GM10248 (cell line): ENCODE measurements at regions of chrX and their contacts with region 1.

Region 1: GRCh38 chrX:101415180-101416145 is 7.4 kb downstream of the HNRNPH2 start:
- DNase-seq: peak; percentile 57
- CTCF ChIP-seq: peak; percentile 33

Region 2: GRCh38 chrX:101430457-101431078 is 15.1 kb after region 1 on chrX:
- CTCF ChIA-PET with region 1: interaction called, 24 read pairs
- POLR2A ChIA-PET with region 1: no interaction called
- DNase-seq: no peak
- CTCF ChIP-seq: no peak

Region 3: DNA sequence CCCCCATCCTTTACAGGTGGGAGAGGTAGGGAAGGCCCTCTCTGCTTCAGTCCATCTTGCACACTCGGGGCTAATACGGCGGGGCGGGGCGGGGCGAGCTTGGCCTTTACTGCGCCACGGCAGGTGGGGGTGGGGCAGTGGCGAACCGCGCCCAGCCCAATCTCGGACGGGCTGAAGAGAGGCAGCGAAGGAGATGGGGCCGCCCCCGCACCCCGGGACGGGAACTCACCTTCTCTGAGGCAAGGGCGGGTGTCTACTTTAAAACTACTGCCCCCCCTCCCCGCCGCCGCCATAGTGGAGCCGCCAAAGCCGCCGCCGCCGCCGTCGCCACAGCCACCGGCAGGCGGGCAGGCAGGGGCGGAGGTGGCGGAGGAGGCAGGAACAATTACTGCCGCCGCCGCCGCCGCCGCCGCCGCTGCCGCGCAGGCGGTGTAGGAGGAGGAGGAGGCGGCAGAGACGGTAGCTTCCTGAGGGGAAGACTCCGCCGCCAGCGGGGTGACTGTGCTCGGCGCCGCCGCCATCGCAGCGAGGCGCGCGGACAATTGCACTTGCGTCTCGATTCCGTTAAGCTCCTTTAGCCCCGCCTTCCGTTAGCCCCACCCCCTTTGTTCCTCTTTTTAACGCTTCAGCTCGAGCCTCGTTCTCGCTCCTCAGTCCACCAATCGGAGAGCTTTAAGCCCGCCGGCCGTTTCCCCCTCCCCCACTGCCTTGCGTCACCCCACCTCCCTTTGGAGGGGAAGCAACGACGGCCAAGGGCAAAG is 516.2 kb after region 1 on chrX and contains the start of gene ZMAT1:
- CTCF ChIA-PET with region 1: no interaction called
- POLR2A ChIA-PET with region 1: interaction called, 10 read pairs
- DNase-seq: peak; percentile 65
- CTCF ChIP-seq: no peak